GM12878 (cell line): ENCODE measurements at regions of chr12 and their contacts with region 1.

Region 1: GRCh38 chr12:111529424-111530368 is 69.4 kb downstream of the ATXN2 start:
- DNase-seq: peak; percentile 24
- ATAC-seq: peak; percentile 95
- H3K4me3 ChIP-seq: no peak overlapping the region
- H3K27ac ChIP-seq: no peak overlapping the region
- H3K4me1 ChIP-seq: no peaks in the 10 kb centered on the region
- H3K27me3 ChIP-seq: no peaks in the 10 kb centered on the region
- CTCF ChIP-seq: peak; percentile 63 to 71 (median 64)
- EP300 ChIP-seq: no peak
- POLR2A ChIP-seq: no peak
- RAD21 ChIP-seq: peak; percentile 70

Region 2: DNA sequence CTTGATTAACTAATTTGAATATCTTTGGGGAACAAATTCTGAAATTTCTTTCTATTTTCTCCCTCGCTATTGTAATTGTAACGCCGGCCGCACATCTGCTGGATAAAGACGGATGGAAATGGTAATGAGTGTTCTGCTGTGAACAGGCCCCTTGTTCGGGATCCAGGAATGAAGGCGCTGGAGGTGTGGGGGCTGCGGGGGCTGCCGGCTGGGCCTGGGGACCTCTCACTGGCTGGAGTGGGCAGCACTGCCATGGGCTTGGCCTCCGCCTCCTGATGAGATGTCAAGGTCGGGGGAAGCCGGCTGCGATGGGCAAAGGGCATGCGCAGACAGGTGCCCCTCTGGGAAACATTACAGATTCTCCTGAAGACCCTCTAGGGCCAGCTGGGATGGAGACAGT is 336.2 kb before region 1 on chr12:
- CTCF ChIA-PET with region 1: no interaction called
- POLR2A ChIA-PET with region 1: no interaction called
- RAD21 ChIA-PET with region 1: no interaction called
- SMC1A ChIA-PET with region 1: no interaction called
- in situ Hi-C with region 1: no loop called
- intact Hi-C with region 1: no loop called
- DNase-seq: no peak
- ATAC-seq: no peak
- H3K4me3 ChIP-seq: no peak overlapping the region
- H3K27ac ChIP-seq: no peak overlapping the region
- H3K4me1 ChIP-seq: no peaks in the 10 kb centered on the region
- H3K27me3 ChIP-seq: peaks cover 0 to 1% of the 10 kb centered on the region in 2 experiments; a peak in 1 of 4 replicates
- CTCF ChIP-seq: no peak
- EP300 ChIP-seq: no peak
- POLR2A ChIP-seq: no peak
- RAD21 ChIP-seq: no peak

Region 3: DNA sequence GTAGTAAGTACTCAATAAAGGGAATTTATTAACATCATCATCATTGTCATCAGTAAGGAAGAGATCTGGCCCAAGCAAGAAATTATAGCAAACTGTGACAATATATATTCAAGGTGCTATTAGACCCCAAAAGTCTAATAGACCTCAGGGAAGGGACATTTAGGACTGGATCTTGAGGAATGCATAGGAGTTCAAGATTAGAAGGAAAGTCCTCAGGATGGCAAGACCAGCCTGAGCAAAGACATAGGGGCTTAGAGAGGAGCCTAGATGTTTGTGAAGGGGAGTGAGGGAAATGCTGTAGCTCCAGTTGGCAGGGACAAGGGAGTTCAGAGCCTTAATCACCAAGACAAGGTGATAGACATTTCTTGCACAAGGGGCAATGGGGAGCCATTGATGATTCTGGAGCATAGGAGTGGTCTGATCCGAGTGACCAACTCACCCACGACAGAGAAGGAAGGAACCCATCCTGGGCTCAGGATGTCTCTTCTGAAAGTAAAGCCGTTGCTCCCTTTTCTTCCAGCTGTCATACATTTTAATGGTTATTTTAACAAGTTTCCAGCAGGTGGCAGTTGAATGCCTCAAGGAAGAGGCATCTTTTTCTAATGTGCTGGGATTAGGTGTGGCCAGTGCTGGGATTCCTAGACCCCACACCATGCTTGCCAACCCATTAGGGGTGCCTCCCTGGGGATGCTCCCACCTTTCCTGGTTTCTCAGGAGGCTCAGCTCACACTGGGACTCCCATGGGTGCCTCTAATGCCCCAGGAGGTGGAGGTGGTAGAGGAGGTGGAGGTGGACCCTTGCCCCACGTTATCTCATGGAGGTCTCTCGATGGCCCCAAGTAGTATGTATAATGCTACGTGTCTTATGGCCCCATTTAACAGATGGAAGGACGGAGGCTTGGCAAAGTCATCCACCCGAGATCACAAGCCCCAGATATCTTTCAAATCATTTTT is 198.6 kb before region 1 on chr12:
- CTCF ChIA-PET with region 1: interaction called, 11 read pairs
- POLR2A ChIA-PET with region 1: no interaction called
- RAD21 ChIA-PET with region 1: no interaction called
- SMC1A ChIA-PET with region 1: interaction called, 3 read pairs
- in situ Hi-C with region 1: no loop called
- intact Hi-C with region 1: loop called (anchors 1 kb)
- DNase-seq: no peak
- ATAC-seq: peak; percentile 69
- H3K4me3 ChIP-seq: no peak overlapping the region
- H3K27ac ChIP-seq: no peak overlapping the region
- H3K4me1 ChIP-seq: no peaks in the 10 kb centered on the region
- H3K27me3 ChIP-seq: no peaks in the 10 kb centered on the region; a peak in 2 of 4 replicates
- CTCF ChIP-seq: peak; percentile 50 to 62 (median 53)
- EP300 ChIP-seq: no peak
- POLR2A ChIP-seq: no peak
- RAD21 ChIP-seq: peak; percentile 54

Region 4: GRCh38 chr12:111384596-111384995 is 145.1 kb before region 1 on chr12:
- CTCF ChIA-PET with region 1: no interaction called
- POLR2A ChIA-PET with region 1: no interaction called
- RAD21 ChIA-PET with region 1: no interaction called
- SMC1A ChIA-PET with region 1: no interaction called
- in situ Hi-C with region 1: no loop called
- intact Hi-C with region 1: no loop called
- DNase-seq: no peak
- ATAC-seq: no peak
- H3K4me3 ChIP-seq: no peak overlapping the region
- H3K27ac ChIP-seq: no peak overlapping the region
- H3K4me1 ChIP-seq: no peaks in the 10 kb centered on the region; the same call in 1 of the 2 replicates
- H3K27me3 ChIP-seq: no peaks in the 10 kb centered on the region; a peak in 1 of 4 replicates
- CTCF ChIP-seq: no peak
- EP300 ChIP-seq: no peak
- POLR2A ChIP-seq: no peak
- RAD21 ChIP-seq: no peak